ENCODE measurements at regions of chr6 and their contacts with region 1.

Region 1: DNA sequence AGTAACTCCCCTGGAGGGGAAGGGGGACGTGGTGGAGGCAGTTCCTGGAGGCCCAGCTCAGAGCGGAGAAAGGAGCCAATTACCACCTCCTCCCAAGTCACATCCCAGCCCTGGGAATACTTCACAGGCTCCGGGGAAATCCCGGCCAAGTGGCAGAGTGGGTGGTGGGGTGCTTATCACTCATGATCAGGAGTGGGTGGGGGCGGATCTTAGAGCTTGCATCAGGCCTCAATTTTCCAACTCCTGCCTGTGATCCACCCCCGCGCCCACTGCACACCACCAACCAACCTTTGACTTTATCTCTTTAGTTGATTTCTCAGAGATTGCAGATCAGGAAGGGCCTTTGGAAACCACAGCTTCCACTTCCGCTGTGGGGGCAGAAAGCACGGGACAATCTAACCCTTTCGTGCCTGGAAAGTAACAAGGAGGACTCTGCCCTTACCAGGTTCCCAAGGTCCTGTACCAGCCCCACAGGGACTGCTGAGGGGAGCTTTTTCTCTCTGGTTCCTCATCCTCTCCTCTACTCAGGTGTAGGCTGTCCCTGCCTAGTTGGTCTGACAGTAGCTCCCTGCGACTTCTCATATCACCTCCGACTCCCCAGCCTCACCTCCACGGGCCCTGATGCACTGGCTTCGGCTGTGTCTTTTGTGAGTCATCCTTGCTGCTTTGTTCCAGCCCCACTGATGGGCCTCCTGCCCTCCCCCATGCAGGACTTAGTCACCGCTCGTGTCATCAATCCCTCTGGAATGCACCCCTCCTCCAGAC is 24.9 kb upstream of the IER3 start:
- DNase-seq: peak; percentile 89
- H3K4me3 Mint-ChIP-seq: peak overlapping the region; percentile 52
- H3K27ac Mint-ChIP-seq: peak overlapping the region; percentile 93
- H3K4me1 Mint-ChIP-seq: peaks cover 65% of the 10 kb centered on the region
- H3K27me3 Mint-ChIP-seq: no peaks in the 10 kb centered on the region

Region 2: GRCh38 chr6:30480536-30481156 is 288.6 kb before region 1 on chr6:
- CTCF ChIA-PET with region 1: no interaction called
- POLR2A ChIA-PET with region 1: no interaction called
- intact Hi-C with region 1: no loop called
- DNase-seq: peak; percentile 75
- H3K4me3 Mint-ChIP-seq: peak overlapping the region; percentile 16
- H3K27ac Mint-ChIP-seq: no peak overlapping the region
- H3K4me1 Mint-ChIP-seq: peaks cover 19% of the 10 kb centered on the region
- H3K27me3 Mint-ChIP-seq: peaks cover 45% of the 10 kb centered on the region

Region 3: GRCh38 chr6:30787954-30788353 is 18.7 kb after region 1 on chr6:
- CTCF ChIA-PET with region 1: interaction called, 6 read pairs
- POLR2A ChIA-PET with region 1: interaction called, 33 read pairs
- intact Hi-C with region 1: loop called (anchors 1 kb)
- DNase-seq: peak; percentile 58
- H3K4me3 Mint-ChIP-seq: peak overlapping the region; percentile 48
- H3K27ac Mint-ChIP-seq: peak overlapping the region; percentile 89
- H3K4me1 Mint-ChIP-seq: peaks cover 61% of the 10 kb centered on the region
- H3K27me3 Mint-ChIP-seq: no peaks in the 10 kb centered on the region